ENCODE measurements at regions of chr18 and their contacts with region 1.

Region 1: GRCh38 chr18:48663931-48664847 is 125.4 kb downstream of the CTIF start:
- DNase-seq: peak; percentile 64 to 83 (median 67)
- ATAC-seq: peak; percentile 7 to 69 (median 54)
- H3K4me3 ChIP-seq: no peak overlapping the region
- H3K27ac ChIP-seq: no peak overlapping the region
- H3K4me1 ChIP-seq: peaks cover 0 to 31% (median 16%) of the 10 kb centered on the region in 12 donors
- H3K27me3 ChIP-seq: no peaks in the 10 kb centered on the region
- CTCF ChIP-seq: peak; percentile 80 to 92 (median 88)
- POLR2A ChIP-seq: no peak

Region 2: DNA sequence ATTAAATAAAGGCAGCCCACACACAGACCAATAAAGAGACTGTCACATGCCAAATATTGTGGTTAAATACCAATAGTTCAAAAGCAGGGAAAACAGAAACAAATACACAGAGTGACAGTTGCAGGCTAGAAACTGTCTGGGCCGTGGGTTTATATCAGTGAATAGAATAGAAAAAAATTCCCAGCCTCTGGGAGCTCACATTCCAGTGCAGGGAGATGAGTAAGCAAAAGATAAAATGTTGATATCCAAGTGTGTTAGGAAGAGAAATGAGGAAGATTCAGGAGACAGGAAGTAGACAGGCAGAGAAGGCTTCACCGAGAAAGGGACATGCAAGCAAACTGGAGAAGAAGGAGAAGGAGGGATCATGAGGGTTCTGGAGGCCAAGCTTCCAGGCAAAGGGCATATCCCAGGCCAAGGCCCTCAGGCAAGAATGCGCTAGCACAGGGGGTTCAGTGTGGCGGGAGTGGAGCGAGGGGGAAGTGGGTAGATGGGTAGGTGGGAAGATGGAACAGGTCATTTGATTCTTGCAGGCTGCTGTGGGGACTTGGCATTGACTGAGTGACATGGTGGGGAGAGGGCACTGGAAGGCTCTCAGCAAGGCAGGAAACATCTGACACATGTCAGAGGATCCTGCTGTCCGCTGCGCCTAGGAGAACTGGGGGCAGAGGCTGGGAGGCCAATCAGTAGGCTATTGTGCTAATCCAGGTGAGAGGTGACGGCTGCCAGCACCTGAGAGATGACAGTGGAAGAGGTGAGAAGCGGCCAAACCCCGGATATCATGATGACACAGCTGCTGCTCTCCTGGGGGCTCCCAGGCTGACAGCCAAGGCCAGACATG is 344.2 kb before region 1 on chr18:
- intact Hi-C with region 1: no loop called
- DNase-seq: no peak
- ATAC-seq: no peak
- H3K4me3 ChIP-seq: no peak overlapping the region
- H3K27ac ChIP-seq: no peak overlapping the region
- H3K4me1 ChIP-seq: peaks cover 0 to 16% (median 0%) of the 10 kb centered on the region in 12 donors
- H3K27me3 ChIP-seq: no peaks in the 10 kb centered on the region
- CTCF ChIP-seq: no peak
- POLR2A ChIP-seq: no peak

Region 3: DNA sequence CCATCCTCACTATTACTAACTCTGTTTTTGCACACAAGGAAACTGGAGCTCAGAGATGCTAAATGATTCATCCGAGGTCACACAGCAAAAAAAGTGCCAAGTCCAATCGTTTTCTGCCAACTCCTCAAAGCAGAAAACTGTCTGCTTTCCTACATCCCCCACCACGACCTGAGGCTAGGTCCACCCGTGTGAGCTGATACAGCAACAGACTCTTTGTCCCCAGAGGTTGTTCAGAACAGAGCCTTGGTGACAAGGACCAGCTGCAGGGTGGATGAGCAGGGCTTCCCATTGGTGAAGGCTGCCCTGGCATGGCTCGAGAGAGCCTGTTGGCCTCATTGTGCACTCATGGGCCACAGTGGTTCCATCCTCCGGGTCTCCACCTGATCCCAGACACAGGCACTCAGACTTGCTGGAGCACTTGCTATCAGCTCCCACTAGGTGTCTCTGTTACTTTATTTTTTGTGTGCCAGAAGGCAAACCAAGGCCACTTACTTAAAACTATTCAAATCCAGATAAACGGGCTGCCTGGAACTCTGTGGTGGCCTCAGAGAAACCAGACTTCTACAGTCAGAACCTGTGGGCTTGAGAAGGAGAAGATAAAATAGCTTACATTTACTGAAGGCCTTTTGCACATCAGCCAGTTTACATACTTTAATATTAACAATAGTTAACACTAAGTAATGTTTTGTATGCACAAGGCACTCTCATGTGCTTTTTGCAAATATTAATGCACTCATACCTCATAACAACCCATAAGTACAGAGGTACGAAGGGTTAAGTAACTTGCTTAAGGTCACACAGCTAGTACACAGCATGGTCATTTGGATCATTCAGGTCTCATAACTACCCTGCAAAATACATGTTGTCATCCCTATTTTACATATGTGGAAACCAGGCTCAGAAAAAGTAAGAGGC is 188.3 kb before region 1 on chr18:
- intact Hi-C with region 1: loop called (anchors 1 to 2 kb)
- DNase-seq: peak in 3 of 5 donors; percentile 41 to 52 (median 42)
- ATAC-seq: peak; percentile 75 to 93 (median 87)
- H3K4me3 ChIP-seq: no peak overlapping the region
- H3K27ac ChIP-seq: no peak overlapping the region
- H3K4me1 ChIP-seq: peaks cover 0 to 11% (median 3%) of the 10 kb centered on the region in 12 donors
- H3K27me3 ChIP-seq: no peaks in the 10 kb centered on the region
- CTCF ChIP-seq: peak; percentile 69 to 90 (median 84)
- POLR2A ChIP-seq: no peak

Region 4: DNA sequence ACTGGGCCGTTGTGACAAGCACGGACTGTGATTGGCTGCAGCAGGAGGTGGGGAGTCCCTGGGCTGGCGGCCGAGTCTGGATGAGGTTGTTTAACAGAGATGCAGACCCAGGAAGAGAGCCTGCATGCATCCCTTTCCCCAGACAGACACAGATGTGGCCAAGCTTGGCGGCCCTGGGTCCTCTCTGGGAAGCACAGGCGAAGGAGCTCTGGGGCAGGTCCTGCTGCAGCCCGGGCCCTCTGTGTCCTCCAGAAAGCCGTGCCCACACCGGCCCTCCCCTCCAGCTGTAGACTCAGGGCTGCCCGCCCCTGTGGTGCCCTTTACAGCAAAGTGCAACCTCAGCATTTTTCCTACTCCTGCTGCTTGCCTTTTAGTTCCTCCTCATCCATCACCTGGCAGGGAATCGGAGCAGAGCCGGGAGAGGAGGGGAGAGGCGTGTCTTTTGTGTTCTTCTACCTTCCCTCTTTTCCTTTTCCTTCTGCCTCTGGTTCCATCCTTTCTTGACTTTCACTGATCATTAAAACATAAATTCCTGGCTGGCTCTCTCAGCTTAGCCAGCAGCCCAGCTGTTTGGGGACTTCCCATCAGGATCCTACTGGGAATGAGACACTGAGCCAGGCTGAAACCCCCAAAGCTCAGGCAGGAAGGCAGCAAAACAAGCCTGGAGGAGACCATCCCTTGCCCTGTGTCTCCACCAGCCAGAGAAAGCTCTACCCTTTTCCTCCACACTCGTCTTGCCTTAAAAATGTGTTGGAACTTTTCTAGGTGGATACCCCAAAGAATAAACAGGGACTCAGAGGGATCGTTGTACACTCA is 50.4 kb before region 1 on chr18:
- intact Hi-C with region 1: loop called in 1 of 10 experiments (anchors 5 kb)
- DNase-seq: peak in 1 of 5 donors; percentile 63
- ATAC-seq: peak in 3 of 4 donors; percentile 23 to 62 (median 39)
- H3K4me3 ChIP-seq: no peak overlapping the region
- H3K27ac ChIP-seq: peak overlapping the region in 6 of 12 donors; percentile 17 to 55 (median 30)
- H3K4me1 ChIP-seq: peaks cover 0 to 76% (median 38%) of the 10 kb centered on the region in 12 donors
- H3K27me3 ChIP-seq: no peaks in the 10 kb centered on the region
- CTCF ChIP-seq: no peak
- POLR2A ChIP-seq: no peak